Aorta (tissue), 5 donors: ENCODE measurements at regions of chr3 and their contacts with region 1.

Region 1: GRCh38 chr3:141561426-141562034 is 74.7 kb downstream of the RASA2 start:
- DNase-seq: no peak
- ATAC-seq: peak; percentile 78
- H3K4me3 ChIP-seq: no peak overlapping the region
- H3K27ac ChIP-seq: no peak overlapping the region
- H3K4me1 ChIP-seq: no peaks in the 10 kb centered on the region
- H3K27me3 ChIP-seq: no peaks in the 10 kb centered on the region

Region 2: DNA sequence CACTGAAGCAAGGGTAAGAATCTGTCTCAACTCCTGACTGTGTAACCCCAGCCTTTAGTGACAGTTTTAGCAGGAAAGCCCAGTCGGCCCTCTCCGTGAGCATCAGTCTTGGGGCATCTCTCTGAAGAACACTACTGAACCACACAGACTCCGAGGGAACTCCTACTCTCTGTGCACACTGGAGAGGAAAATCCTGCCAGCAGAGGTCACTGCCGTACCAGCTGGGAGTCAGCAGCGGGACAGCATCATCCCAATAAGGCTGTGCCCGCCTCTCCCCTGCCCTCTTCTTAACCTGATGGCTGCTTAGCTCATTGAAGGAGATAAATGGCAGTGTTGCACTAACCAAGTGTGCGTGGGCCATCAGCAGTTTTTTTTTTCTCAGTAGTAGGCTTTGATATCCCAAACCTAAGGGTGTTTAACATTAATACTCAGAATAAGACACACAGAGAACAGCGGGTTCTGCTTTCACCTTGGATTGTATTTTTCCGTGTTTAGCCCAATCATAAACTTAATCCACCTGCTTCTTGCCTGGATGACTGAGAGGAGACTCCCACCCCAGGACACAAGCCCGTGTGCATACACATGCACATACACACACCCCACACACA is 101.3 kb before region 1 on chr3:
- intact Hi-C with region 1: loop called (anchors 1 to 2 kb)
- DNase-seq: peak; percentile 94 to 95
- ATAC-seq: peak; percentile 93
- H3K4me3 ChIP-seq: no peak overlapping the region
- H3K27ac ChIP-seq: no peak overlapping the region
- H3K4me1 ChIP-seq: no peaks in the 10 kb centered on the region
- H3K27me3 ChIP-seq: no peaks in the 10 kb centered on the region

Region 3: GRCh38 chr3:141487521-141488252 is 73.8 kb before region 1 on chr3:
- intact Hi-C with region 1: loop called in 1 of 2 experiments (anchors 5 kb)
- DNase-seq: peak; percentile 83 to 88
- ATAC-seq: peak; percentile 77
- H3K4me3 ChIP-seq: peak overlapping the region; percentile 64 to 98
- H3K27ac ChIP-seq: peak overlapping the region; percentile 71 to 89
- H3K4me1 ChIP-seq: peaks cover 0 to 3% of the 10 kb centered on the region in 2 donors
- H3K27me3 ChIP-seq: no peaks in the 10 kb centered on the region